B cell (primary cell): ENCODE measurements at regions of chr5 and their contacts with region 1.

Region 1: GRCh38 chr5:180868960-180869359 is 7.9 kb upstream of the ZFP62 start:
- DNase-seq: peak; percentile 67
- ATAC-seq: peak; percentile 53
- H3K4me3 ChIP-seq: no peak overlapping the region
- H3K4me3 Mint-ChIP-seq: no peak overlapping the region
- H3K27ac ChIP-seq: no peak overlapping the region
- H3K27ac Mint-ChIP-seq: peak overlapping the region; percentile 11
- H3K4me1 ChIP-seq: no peaks in the 10 kb centered on the region
- H3K4me1 Mint-ChIP-seq: peaks cover 5% of the 10 kb centered on the region
- H3K27me3 ChIP-seq: no peaks in the 10 kb centered on the region
- H3K27me3 Mint-ChIP-seq: peaks cover 22% of the 10 kb centered on the region
- CTCF ChIP-seq: peak; percentile 71

Region 2: DNA sequence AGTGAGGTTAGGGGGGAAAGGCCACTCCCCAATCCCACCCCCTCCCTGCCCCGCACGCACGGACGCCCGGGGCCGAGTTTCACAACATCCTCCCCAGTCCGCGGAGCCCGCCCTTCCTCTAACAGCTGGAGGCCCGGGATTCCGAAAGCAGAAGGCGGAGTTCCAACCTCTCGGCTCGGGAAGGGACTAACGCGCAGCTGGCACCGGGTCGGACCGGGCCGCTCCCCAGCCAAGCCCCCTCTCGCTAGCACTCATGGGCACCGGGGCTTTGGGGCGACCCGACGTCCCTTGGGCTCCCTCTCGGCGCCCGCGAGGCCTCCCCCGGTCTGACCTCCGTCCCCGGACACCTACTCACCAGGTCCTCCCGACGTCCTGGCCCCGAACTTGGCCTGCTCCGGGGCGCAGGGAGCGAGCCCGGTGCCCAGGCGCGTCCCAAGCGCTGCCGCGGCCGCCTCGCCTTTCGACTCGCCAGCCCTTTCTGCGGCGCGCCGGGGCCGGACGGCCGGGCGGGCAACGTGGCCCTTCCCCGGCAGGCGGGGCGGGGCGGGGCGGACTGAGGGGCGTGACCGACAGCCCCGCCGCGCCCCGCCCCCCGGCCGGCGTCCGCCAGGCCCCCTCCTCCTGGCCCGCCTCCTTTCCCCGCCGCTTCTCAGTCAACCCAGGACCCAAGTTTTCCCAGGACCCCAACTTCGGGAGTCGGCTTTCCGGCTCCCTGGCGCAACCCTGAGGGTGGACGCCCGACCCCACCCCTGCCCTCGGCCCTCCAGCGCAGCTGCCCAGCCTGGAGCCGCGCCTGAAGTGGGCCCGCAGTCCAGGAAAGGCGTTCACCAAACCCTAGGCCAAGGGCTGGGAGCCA is 66.4 kb before region 1 on chr5 and contains the start of gene MGAT1:
- CTCF ChIA-PET with region 1: interaction called, 11 read pairs
- POLR2A ChIA-PET with region 1: no interaction called
- intact Hi-C with region 1: no loop called
- DNase-seq: peak; percentile 82
- ATAC-seq: peak; percentile 65
- H3K4me3 ChIP-seq: peak within 1 kb of the TSS; percentile 82 to 96 (median 90)
- H3K4me3 Mint-ChIP-seq: peak within 1 kb of the TSS; percentile 96
- H3K27ac ChIP-seq: peak within 1 kb of the TSS; percentile 81 to 90
- H3K27ac Mint-ChIP-seq: peak within 1 kb of the TSS; percentile 87
- H3K4me1 ChIP-seq: peaks cover 80 to 83% of the 10 kb centered on the region in 2 donors
- H3K4me1 Mint-ChIP-seq: peaks cover 84% of the 10 kb centered on the region
- H3K27me3 ChIP-seq: no peaks in the 10 kb centered on the region
- H3K27me3 Mint-ChIP-seq: no peaks in the 10 kb centered on the region
- CTCF ChIP-seq: no peak
- total RNA-seq, gene MGAT1: 140 and 144 TPM in 2 replicates

Region 3: GRCh38 chr5:180898621-180899246 is 29.8 kb after region 1 on chr5 and contains the start of gene BTNL8:
- CTCF ChIA-PET with region 1: no interaction called
- POLR2A ChIA-PET with region 1: no interaction called
- intact Hi-C with region 1: no loop called
- DNase-seq: no peak
- ATAC-seq: no peak
- H3K4me3 ChIP-seq: no peak within 1 kb of the TSS
- H3K4me3 Mint-ChIP-seq: no peak within 1 kb of the TSS
- H3K27ac ChIP-seq: no peak within 1 kb of the TSS
- H3K27ac Mint-ChIP-seq: no peak within 1 kb of the TSS
- H3K4me1 ChIP-seq: no peaks in the 10 kb centered on the region
- H3K4me1 Mint-ChIP-seq: peaks cover 2% of the 10 kb centered on the region
- H3K27me3 ChIP-seq: peaks cover 0 to 3% (median 0%) of the 10 kb centered on the region in 4 experiments
- H3K27me3 Mint-ChIP-seq: peaks cover 2% of the 10 kb centered on the region
- CTCF ChIP-seq: no peak
- total RNA-seq, gene BTNL8: not detected in 2 replicates

Region 4: GRCh38 chr5:181028032-181028819 is 159.3 kb after region 1 on chr5:
- CTCF ChIA-PET with region 1: no interaction called
- POLR2A ChIA-PET with region 1: no interaction called
- intact Hi-C with region 1: no loop called
- DNase-seq: no peak
- ATAC-seq: no peak
- H3K4me3 ChIP-seq: no peak overlapping the region
- H3K4me3 Mint-ChIP-seq: no peak overlapping the region
- H3K27ac ChIP-seq: no peak overlapping the region
- H3K27ac Mint-ChIP-seq: no peak overlapping the region
- H3K4me1 ChIP-seq: no peaks in the 10 kb centered on the region
- H3K4me1 Mint-ChIP-seq: no peaks in the 10 kb centered on the region
- H3K27me3 ChIP-seq: peaks cover 0 to 9% (median 1%) of the 10 kb centered on the region in 4 experiments
- H3K27me3 Mint-ChIP-seq: peaks cover 36% of the 10 kb centered on the region
- CTCF ChIP-seq: no peak

Region 5: DNA sequence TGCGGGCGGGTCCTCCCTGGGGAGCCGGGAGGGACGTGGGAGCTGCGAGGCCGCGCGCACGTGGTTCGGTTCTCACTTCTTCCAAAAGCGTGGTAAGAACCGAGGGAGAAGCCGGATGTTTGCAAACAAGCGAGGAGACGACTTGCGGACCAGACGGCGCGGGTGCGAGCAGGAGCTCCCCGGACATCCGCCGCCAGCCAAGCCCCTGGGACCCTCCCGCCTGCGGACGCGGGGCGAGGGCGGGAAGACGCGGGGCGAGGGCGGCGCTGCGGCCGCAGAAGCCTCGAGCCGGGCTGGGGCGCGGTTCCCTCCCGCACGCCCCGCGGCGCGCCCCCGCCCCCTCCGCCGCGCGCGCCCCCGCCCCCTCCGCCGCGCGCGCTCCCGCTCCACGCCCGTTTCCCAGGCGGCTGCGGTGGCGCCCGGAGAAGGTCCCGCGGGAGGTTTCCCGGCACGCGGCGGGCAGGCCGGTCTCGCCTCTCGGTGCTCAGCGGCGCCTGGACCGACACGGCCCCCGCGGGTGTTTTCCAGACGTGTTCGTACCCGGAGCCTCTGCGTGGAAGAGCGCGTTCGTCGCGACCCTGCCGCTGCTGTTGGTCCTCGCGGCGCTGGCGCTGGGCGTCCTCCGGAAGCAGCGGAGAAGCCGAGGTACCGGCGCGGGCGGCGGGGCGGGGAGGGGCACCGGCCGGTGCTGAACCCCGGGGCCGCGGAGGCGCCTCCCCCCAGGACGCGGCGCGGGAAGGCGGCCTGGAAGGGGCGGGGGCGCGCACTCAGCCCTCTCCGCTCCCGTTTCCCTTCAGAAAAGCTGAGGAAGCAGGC is 183.9 kb after region 1 on chr5:
- CTCF ChIA-PET with region 1: interaction called, 5 read pairs
- POLR2A ChIA-PET with region 1: interaction called, 5 read pairs
- intact Hi-C with region 1: loop called (anchors 2 kb)
- DNase-seq: peak; percentile 39
- ATAC-seq: peak; percentile 25
- H3K4me3 ChIP-seq: peak overlapping the region in 4 of 5 experiments; percentile 26 to 63 (median 50)
- H3K4me3 Mint-ChIP-seq: peak overlapping the region; percentile 91
- H3K27ac ChIP-seq: peak overlapping the region in 1 of 2 donors; percentile 2
- H3K27ac Mint-ChIP-seq: peak overlapping the region; percentile 89
- H3K4me1 ChIP-seq: peaks cover 28 to 47% of the 10 kb centered on the region in 2 donors
- H3K4me1 Mint-ChIP-seq: peaks cover 53% of the 10 kb centered on the region
- H3K27me3 ChIP-seq: peaks cover 0 to 75% (median 36%) of the 10 kb centered on the region in 4 experiments
- H3K27me3 Mint-ChIP-seq: peaks cover 53% of the 10 kb centered on the region
- CTCF ChIP-seq: no peak

Region 6: GRCh38 chr5:181260387-181261319 is 391.7 kb after region 1 on chr5 and contains the start of gene TRIM52:
- CTCF ChIA-PET with region 1: no interaction called
- POLR2A ChIA-PET with region 1: no interaction called
- intact Hi-C with region 1: no loop called
- DNase-seq: peak; percentile 94
- ATAC-seq: peak; percentile 79
- H3K4me3 ChIP-seq: peak within 1 kb of the TSS; percentile 67 to 99 (median 98)
- H3K4me3 Mint-ChIP-seq: peak within 1 kb of the TSS; percentile 95
- H3K27ac ChIP-seq: peak within 1 kb of the TSS; percentile 98
- H3K27ac Mint-ChIP-seq: peak within 1 kb of the TSS; percentile 97
- H3K4me1 ChIP-seq: peaks cover 22 to 38% of the 10 kb centered on the region in 2 donors
- H3K4me1 Mint-ChIP-seq: peaks cover 53% of the 10 kb centered on the region
- H3K27me3 ChIP-seq: no peaks in the 10 kb centered on the region
- H3K27me3 Mint-ChIP-seq: no peaks in the 10 kb centered on the region
- CTCF ChIP-seq: peak; percentile 17
- total RNA-seq, gene TRIM52: 58.6 and 61.3 TPM in 2 replicates